ENCODE measurements at regions of chr2 and their contacts with region 1.

Region 1: DNA sequence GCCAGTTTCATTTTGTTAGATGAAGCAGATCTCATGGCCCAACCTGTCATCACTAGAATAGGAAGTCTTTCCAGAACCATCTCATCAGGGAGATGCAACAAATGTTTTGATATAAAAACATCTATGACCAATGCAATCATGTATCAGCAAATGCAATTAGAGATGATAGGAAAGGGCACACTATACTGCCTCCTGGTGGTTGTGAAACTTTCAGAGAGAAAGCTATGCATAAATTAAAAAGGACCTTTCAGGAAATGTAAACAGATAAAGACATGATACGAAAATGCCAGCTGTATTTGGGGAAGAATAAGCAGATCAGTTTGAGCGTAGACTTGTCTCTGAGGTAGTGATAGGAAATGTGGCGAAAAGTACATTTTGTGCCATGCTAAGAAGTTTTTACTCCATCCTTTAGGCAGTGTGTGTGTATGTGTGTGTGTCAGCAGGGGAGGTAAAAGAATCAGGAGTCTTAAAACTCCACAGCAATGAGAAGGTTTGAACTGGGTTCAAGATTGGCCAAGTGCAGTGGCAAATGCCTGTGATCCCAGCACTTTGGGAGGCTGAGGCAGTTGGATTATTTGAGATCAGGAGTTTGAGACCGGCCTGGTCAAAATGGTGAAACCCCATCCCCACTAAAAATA is 479.3 kb downstream of the CPS1 start:
- DNase-seq: peak; percentile 29
- H3K4me3 ChIP-seq: no peak overlapping the region
- H3K27ac ChIP-seq: no peak overlapping the region
- H3K4me1 ChIP-seq: no peaks in the 10 kb centered on the region
- H3K27me3 ChIP-seq: peaks cover 5% of the 10 kb centered on the region
- CTCF ChIP-seq: peak; percentile 62 to 77

Region 2: DNA sequence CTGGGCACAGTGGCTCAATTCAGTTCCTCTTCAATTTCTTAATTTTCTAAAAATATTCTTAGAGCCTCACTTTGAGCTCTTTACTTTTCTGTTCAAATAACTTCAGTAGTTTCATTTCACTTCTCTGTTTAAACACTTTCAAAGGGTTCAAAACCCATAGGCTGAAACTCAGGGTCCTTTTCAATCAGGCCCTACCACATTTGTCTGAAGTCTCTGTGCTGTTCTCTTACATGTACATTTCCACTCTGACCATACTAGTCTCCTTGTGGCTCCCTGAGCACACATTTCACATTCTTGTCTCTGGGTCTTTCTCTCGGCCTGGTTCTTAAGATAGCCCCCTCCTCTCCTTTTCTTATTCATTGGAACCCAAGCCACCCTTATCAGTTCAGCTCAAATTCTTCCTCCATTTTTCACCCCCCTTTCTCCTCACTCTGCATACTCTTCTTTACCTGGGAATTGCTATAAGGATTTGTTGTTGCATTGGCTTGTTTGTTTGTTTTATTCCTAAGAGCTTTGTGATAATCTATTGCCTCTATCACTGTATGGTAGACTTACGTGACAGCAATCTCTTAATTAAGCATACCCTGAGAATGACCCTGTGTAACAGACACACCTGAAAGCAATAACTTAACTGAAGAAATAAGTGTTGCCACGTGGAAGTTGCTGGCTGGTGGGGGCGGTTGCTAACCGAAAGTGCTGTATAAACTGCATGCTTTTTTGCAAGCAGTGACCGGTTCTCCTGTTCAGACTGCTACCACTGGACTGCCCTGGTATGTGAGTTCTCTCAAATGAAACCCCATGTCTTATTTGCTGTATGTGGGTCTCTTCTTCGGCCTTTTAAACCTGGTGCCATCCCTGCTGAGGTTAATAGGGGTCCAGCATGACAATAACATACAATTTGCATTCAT is 782.7 kb before region 1 on chr2:
- CTCF ChIA-PET with region 1: no interaction called
- dilution Hi-C with region 1: no loop called
- in situ Hi-C with region 1: no loop called
- intact Hi-C with region 1: loop called (anchors 5 kb)
- DNase-seq: no peak
- H3K4me3 ChIP-seq: no peak overlapping the region
- H3K27ac ChIP-seq: no peak overlapping the region
- H3K4me1 ChIP-seq: no peaks in the 10 kb centered on the region
- H3K27me3 ChIP-seq: no peaks in the 10 kb centered on the region
- CTCF ChIP-seq: no peak

Region 3: GRCh38 chr2:210503001-210503623 is 532.6 kb before region 1 on chr2:
- CTCF ChIA-PET with region 1: no interaction called
- dilution Hi-C with region 1: no loop called
- in situ Hi-C with region 1: no loop called
- intact Hi-C with region 1: loop called (anchors 1 kb)
- DNase-seq: peak; percentile 49
- H3K4me3 ChIP-seq: no peak overlapping the region
- H3K27ac ChIP-seq: no peak overlapping the region
- H3K4me1 ChIP-seq: peaks cover 9% of the 10 kb centered on the region
- H3K27me3 ChIP-seq: no peaks in the 10 kb centered on the region
- CTCF ChIP-seq: peak; percentile 92 to 97

Region 4: GRCh38 chr2:210626849-210627248 is 408.8 kb before region 1 on chr2:
- CTCF ChIA-PET with region 1: interaction called, 11 read pairs
- dilution Hi-C with region 1: no loop called
- in situ Hi-C with region 1: loop called in 1 of 2 experiments (anchors 25 kb)
- intact Hi-C with region 1: no loop called
- DNase-seq: peak; percentile 24
- H3K4me3 ChIP-seq: no peak overlapping the region
- H3K27ac ChIP-seq: no peak overlapping the region
- H3K4me1 ChIP-seq: no peaks in the 10 kb centered on the region
- H3K27me3 ChIP-seq: no peaks in the 10 kb centered on the region
- CTCF ChIP-seq: no peak

Region 5: DNA sequence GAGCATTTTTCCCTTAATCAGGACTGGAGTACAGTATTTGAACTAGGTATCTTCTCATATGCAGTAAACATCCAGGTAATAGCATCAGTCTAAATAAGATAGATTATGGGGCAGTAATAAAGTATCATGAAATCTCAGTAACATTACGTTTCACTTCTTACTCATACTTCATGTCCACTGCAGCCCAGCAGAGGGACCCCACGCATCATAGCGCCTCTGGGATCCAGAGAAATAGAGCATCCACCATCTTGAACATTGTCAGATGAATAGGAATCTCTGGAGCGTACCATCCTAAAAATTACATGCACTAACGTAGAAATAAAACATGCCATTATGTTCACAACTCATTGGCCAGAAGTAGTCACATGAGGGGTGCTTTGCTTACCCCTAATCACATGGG is 19.8 kb after region 1 on chr2:
- CTCF ChIA-PET with region 1: no interaction called
- dilution Hi-C with region 1: no loop called
- in situ Hi-C with region 1: no loop called
- intact Hi-C with region 1: no loop called
- DNase-seq: no peak
- H3K4me3 ChIP-seq: no peak overlapping the region
- H3K27ac ChIP-seq: no peak overlapping the region
- H3K4me1 ChIP-seq: no peaks in the 10 kb centered on the region
- H3K27me3 ChIP-seq: no peaks in the 10 kb centered on the region
- CTCF ChIP-seq: peak in 1 of 2 donors; percentile 10

Region 6: GRCh38 chr2:211157856-211158463 is 122.3 kb after region 1 on chr2:
- CTCF ChIA-PET with region 1: no interaction called
- dilution Hi-C with region 1: no loop called
- in situ Hi-C with region 1: no loop called
- intact Hi-C with region 1: loop called (anchors 1 kb)
- DNase-seq: peak; percentile 58
- H3K4me3 ChIP-seq: no peak overlapping the region
- H3K27ac ChIP-seq: no peak overlapping the region
- H3K4me1 ChIP-seq: no peaks in the 10 kb centered on the region
- H3K27me3 ChIP-seq: no peaks in the 10 kb centered on the region
- CTCF ChIP-seq: peak; percentile 81 to 87